ENCODE measurements at regions of chr1 and their contacts with region 1.

Region 1: DNA sequence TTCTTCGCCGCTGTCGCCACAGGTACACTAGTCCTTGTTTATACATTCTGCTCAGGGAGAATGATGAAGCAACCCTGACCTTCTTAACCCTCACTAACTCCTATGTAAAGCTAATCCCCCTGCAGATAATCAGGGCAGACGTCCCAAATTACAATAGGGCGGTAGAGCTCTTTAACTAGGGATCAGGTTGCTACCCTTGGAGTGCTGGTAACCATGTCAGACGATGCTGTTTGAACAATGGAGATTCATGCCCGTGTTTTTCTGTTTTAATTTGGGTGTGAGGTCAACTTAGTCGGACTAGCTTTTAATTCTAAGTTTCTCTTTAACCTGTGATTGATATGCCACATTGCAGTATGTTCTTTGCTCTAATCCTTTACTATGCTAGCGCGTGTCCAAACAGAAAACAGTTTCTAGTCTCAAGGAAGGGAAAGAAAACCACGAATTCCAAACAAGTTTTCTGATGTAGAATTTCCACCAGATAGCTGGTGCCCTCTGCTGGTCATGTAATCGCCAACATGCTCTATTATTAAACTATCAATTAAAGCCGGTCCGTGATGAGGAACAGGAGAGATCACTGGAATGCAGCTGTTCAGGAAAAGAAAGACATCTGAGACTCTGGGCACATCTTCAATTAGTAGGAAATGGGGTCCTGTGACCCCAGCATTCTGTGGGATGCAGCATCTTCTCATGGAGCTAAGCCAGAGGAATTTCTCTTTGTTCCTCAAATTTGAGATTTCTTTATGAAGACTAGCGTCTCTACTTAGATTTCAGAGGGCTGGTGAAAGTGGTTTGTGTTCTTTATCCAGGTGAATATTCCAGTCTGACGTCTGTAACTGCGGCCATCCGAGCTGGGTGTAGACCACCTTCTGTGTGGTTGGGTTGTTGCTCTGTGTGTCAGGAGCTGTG is 18.3 kb upstream of the VAMP3 start:
- DNase-seq: peak; percentile 69
- H3K4me3 Mint-ChIP-seq: no peak overlapping the region
- H3K27ac Mint-ChIP-seq: no peak overlapping the region
- H3K4me1 Mint-ChIP-seq: peaks cover 8% of the 10 kb centered on the region
- H3K27me3 Mint-ChIP-seq: peaks cover 8% of the 10 kb centered on the region

Region 2: GRCh38 chr1:7418442-7419080 is 334.2 kb before region 1 on chr1:
- CTCF ChIA-PET with region 1: no interaction called
- intact Hi-C with region 1: no loop called
- DNase-seq: no peak
- H3K4me3 Mint-ChIP-seq: no peak overlapping the region
- H3K27ac Mint-ChIP-seq: no peak overlapping the region
- H3K4me1 Mint-ChIP-seq: no peaks in the 10 kb centered on the region
- H3K27me3 Mint-ChIP-seq: peaks cover 4% of the 10 kb centered on the region

Region 3: GRCh38 chr1:7667625-7668218 is 85.0 kb before region 1 on chr1:
- CTCF ChIA-PET with region 1: interaction called, 368 read pairs
- intact Hi-C with region 1: loop called (anchors 1 kb)
- DNase-seq: peak; percentile 89
- H3K4me3 Mint-ChIP-seq: no peak overlapping the region
- H3K27ac Mint-ChIP-seq: no peak overlapping the region
- H3K4me1 Mint-ChIP-seq: peaks cover 1% of the 10 kb centered on the region
- H3K27me3 Mint-ChIP-seq: peaks cover 3% of the 10 kb centered on the region

Region 4: GRCh38 chr1:7704214-7705047 is 48.3 kb before region 1 on chr1:
- CTCF ChIA-PET with region 1: interaction called, 20 read pairs
- intact Hi-C with region 1: no loop called
- DNase-seq: peak; percentile 94
- H3K4me3 Mint-ChIP-seq: peak overlapping the region; percentile 68
- H3K27ac Mint-ChIP-seq: no peak overlapping the region
- H3K4me1 Mint-ChIP-seq: peaks cover 10% of the 10 kb centered on the region
- H3K27me3 Mint-ChIP-seq: peaks cover 43% of the 10 kb centered on the region

Region 5: GRCh38 chr1:7770997-7771822 is 18.4 kb after region 1 on chr1 and contains the start of gene VAMP3:
- CTCF ChIA-PET with region 1: interaction called, 12 read pairs
- intact Hi-C with region 1: no loop called
- DNase-seq: peak; percentile 89
- H3K4me3 Mint-ChIP-seq: peak within 1 kb of the TSS; percentile 83
- H3K27ac Mint-ChIP-seq: peak within 1 kb of the TSS; percentile 60
- H3K4me1 Mint-ChIP-seq: peaks cover 34% of the 10 kb centered on the region
- H3K27me3 Mint-ChIP-seq: peaks cover 6% of the 10 kb centered on the region
- total RNA-seq, gene VAMP3: 16.7 to 19.4 TPM

Measured in activated naive CD4-positive, alpha-beta T cell treated with anti-CD3 and anti-CD28 coated beads for 36 hours (primary cell).